ENCODE measurements at regions of chr2 and their contacts with region 1.

Region 1: DNA sequence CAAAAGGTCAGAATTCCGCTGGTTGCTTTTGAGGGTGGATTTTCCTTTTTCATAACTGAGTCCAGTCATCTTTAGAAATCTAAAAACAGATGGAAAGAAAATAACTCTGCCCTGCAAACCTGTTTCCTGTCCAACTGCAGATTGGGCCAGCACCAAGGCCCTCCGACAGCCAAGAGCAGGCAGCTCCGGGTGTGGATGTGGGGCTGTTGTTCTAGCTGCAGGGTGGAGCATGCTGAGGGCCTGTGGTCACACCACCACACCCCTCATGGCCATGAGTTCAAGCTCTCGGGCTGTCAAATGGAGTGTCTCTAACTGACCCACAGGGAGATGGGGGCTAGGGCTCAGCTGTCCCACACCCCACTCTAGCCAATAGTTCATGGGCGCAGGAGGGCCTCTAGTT is 69.3 kb upstream of the BZW1 start:
- DNase-seq: peak; percentile 63 to 71
- ATAC-seq: peak; percentile 67 to 94 (median 92)
- H3K4me3 ChIP-seq: no peak overlapping the region
- H3K27ac ChIP-seq: peak overlapping the region; percentile 32 to 79 (median 58)
- H3K4me1 ChIP-seq: peaks cover 6 to 39% (median 13%) of the 10 kb centered on the region in 9 donors
- H3K27me3 ChIP-seq: no peaks in the 10 kb centered on the region
- CTCF ChIP-seq: no peak

Region 2: DNA sequence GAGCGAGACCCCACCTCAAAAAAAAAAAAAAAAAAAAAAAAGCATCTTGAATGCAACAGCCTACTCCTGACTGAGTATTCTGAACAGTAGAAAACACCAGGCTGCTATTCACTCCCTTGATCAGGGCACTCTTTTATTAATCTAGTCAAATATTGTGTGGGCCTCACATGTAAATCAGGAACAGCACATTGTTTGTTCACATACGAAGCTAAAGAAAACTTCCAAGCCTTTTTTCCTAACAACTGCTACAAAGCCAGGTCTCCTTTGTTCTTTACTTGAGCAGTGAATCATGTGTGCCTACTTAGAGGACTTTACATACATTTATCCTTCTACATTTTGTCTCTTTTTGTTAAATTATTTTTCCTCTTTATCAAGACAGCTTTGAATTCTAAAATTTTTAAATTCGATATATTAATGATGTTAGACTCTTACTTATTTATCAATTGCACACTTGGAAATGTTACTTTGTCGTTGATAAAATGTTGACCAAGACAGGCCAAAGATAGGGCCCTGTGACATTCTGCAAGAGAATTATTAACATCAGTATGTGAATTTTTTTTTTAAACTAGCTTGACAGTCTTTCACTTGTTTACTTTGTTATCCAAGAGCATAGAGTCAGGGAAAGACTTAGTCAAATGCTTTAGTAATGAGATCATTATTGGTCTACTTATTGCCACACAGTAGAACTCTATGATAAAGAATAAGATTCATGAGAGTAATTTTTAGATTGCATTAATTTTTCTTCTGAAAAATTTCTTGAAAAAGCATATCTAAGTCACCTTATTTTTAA is 422.7 kb before region 1 on chr2:
- intact Hi-C with region 1: no loop called
- DNase-seq: no peak
- ATAC-seq: peak in 6 of 8 donors; percentile 62 to 76 (median 72)
- H3K4me3 ChIP-seq: no peak overlapping the region
- H3K27ac ChIP-seq: peak overlapping the region in 7 of 10 donors; percentile 18 to 51 (median 41)
- H3K4me1 ChIP-seq: peaks cover 0 to 84% (median 47%) of the 10 kb centered on the region in 9 donors
- H3K27me3 ChIP-seq: no peaks in the 10 kb centered on the region
- CTCF ChIP-seq: no peak

Region 3: GRCh38 chr2:200787348-200788120 is 45.1 kb after region 1 on chr2:
- intact Hi-C with region 1: loop called in 3 of 10 experiments (anchors 5 kb)
- DNase-seq: no peak
- ATAC-seq: peak in 7 of 8 donors; percentile 17 to 82 (median 45)
- H3K4me3 ChIP-seq: no peak overlapping the region
- H3K27ac ChIP-seq: peak overlapping the region in 5 of 10 donors; percentile 3 to 83 (median 19)
- H3K4me1 ChIP-seq: peaks cover 0 to 28% (median 13%) of the 10 kb centered on the region in 9 donors
- H3K27me3 ChIP-seq: no peaks in the 10 kb centered on the region
- CTCF ChIP-seq: no peak

Region 4: DNA sequence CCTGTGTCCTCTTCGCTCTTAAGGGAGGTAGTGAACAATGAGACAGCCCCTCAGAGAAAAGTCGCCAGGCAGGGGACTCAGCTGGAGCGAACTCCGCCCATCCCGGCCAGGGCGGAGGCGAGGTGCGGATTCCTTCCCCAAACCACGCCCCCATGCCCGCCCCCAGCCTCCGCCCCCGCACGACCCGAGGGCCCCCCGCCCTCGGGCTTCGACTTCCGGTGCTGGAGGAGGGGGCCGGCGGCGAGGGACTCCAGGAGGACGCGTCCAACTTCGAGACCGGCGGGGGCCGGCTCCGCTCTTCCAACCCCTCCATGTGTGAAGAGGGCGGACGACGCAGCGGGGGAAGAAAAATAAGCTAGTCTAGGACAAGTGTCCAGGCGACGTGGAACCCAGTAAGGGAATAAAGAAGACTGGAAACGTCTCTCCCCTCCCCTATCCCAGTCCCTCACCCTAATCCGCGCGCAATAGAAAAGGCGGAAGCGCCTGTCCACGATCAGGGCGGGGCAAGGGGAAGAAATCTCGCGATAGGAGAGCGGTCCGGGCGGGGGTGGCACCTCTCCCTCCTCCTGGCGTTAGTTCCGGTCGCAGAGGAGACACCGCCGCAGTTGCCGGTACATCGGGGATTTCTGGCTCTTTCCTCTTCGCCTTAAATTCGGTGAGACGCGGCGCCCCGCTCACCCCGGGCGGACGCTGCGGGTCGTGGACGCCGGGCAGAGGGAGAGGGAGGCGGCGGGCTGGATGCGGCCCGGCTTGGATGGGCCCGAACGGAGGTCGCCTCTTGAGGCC is 69.1 kb after region 1 on chr2 and contains the start of gene BZW1:
- intact Hi-C with region 1: no loop called
- DNase-seq: peak; percentile 96 to 98
- ATAC-seq: peak; percentile 93 to 98 (median 96)
- H3K4me3 ChIP-seq: peak within 1 kb of the TSS; percentile 76 to 96 (median 92)
- H3K27ac ChIP-seq: peak within 1 kb of the TSS; percentile 89 to 99 (median 98)
- H3K4me1 ChIP-seq: peaks cover 3 to 47% (median 41%) of the 10 kb centered on the region in 9 donors
- H3K27me3 ChIP-seq: no peaks in the 10 kb centered on the region
- CTCF ChIP-seq: no peak
- total RNA-seq, gene BZW1: 62.5 to 133 (median 77.2) TPM

Measured in heart right ventricle (tissue), 16 donors.